ENCODE measurements at regions of chr12 and their contacts with region 1.

Region 1: GRCh38 chr12:9039397-9039977 is 50.1 kb downstream of the KLRG1 start:
- DNase-seq: peak in 3 of 7 donors; percentile 17 to 39 (median 24)
- H3K4me3 ChIP-seq: no peak overlapping the region
- H3K27ac ChIP-seq: no peak overlapping the region
- H3K4me1 ChIP-seq: peaks cover 4 to 5% of the 10 kb centered on the region in 2 donors
- H3K27me3 ChIP-seq: no peaks in the 10 kb centered on the region
- CTCF ChIP-seq: peak; percentile 52 to 88 (median 82)
- POLR2A ChIP-seq: no peak

Region 2: GRCh38 chr12:8949342-8950220 is 89.9 kb before region 1 on chr12 and contains the start of gene M6PR:
- intact Hi-C with region 1: loop called (anchors 5 to 10 kb)
- DNase-seq: peak; percentile 92 to 97 (median 96)
- H3K4me3 ChIP-seq: peak within 1 kb of the TSS; percentile 58 to 85 (median 82)
- H3K27ac ChIP-seq: peak within 1 kb of the TSS; percentile 96 to 98 (median 97)
- H3K4me1 ChIP-seq: peaks cover 7 to 25% of the 10 kb centered on the region in 2 donors
- H3K27me3 ChIP-seq: no peaks in the 10 kb centered on the region
- CTCF ChIP-seq: peak; percentile 22 to 70 (median 62)
- POLR2A ChIP-seq: peak; percentile 59 to 69
- total RNA-seq, gene M6PR: 76.1 to 194 (median 141) TPM

Measured in adrenal gland (tissue), 19 donors.